WTC11 (cell line): ENCODE measurements at regions of chr3 and their contacts with region 1.

Region 1: GRCh38 chr3:12135029-12135657 is 23.6 kb downstream of the TIMP4 start:
- DNase-seq: peak; percentile 74
- ATAC-seq: peak; percentile 93
- H3K4me3 Mint-ChIP-seq: no peak overlapping the region
- H3K27ac Mint-ChIP-seq: no peak overlapping the region
- H3K4me1 Mint-ChIP-seq: no peaks in the 10 kb centered on the region; the same call in 1 of the 2 replicates
- H3K27me3 Mint-ChIP-seq: no peaks in the 10 kb centered on the region
- CTCF ChIP-seq: peak; percentile 61; the same call in 1 of the 2 replicates

Region 2: GRCh38 chr3:11976976-11977375 is 158.2 kb before region 1 on chr3:
- CTCF ChIA-PET with region 1: no interaction called
- POLR2A ChIA-PET with region 1: no interaction called
- DNase-seq: no peak
- ATAC-seq: no peak
- H3K4me3 Mint-ChIP-seq: no peak overlapping the region
- H3K27ac Mint-ChIP-seq: no peak overlapping the region
- H3K4me1 Mint-ChIP-seq: peaks cover 5% of the 10 kb centered on the region
- H3K27me3 Mint-ChIP-seq: peaks cover 3% of the 10 kb centered on the region; the same call in 1 of the 2 replicates
- CTCF ChIP-seq: no peak

Region 3: DNA sequence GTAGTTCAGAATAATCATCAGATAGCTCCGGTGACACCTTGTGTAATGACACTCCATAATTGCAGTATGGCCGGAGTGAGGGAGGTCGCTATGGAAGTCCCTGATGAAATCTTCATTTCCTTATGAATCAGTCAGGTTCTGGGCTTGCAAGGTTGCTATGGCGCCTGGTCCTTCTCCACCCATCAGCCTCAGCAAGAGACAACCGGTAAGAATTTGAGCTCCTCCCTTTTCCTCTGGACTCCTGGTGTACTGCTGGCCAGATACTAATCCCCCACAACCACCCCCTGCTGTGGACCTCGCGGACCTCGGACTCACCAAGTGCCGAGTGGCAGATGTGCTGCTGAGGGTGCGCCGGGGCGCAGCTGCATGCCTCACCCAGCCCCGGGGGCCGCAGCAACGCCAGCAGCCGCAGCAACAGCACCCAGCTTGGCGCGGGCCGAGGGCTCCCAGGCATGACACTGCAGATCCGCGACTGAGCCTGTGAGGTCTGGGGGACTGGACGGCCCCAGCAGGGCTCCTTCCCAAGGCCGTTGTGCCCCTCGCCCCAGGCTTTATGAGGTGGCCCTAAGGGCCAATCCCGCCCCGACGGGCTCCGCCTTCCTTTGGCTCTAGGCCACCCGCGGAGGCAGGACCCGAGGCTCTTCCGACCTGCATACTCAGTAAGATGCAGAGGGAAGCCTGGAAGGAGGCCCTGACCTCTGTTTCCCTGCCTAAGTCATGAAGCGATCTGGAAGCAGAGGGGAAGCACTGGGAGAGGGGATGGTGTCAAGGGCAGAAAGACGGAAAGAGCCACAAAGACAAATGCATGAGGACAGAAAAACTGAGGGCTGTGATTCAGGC is 23.5 kb after region 1 on chr3 and contains the start of gene TIMP4:
- CTCF ChIA-PET with region 1: interaction called, 15 read pairs
- POLR2A ChIA-PET with region 1: no interaction called
- DNase-seq: peak; percentile 49
- ATAC-seq: peak; percentile 69
- H3K4me3 Mint-ChIP-seq: peak within 1 kb of the TSS; percentile 66
- H3K27ac Mint-ChIP-seq: peak within 1 kb of the TSS; percentile 92
- H3K4me1 Mint-ChIP-seq: peaks cover 44% of the 10 kb centered on the region
- H3K27me3 Mint-ChIP-seq: no peaks in the 10 kb centered on the region
- CTCF ChIP-seq: no peak
- total RNA-seq, gene TIMP4: 4.1 to 11.8 TPM (median 4.8 TPM) in 3 replicates

Region 4: DNA sequence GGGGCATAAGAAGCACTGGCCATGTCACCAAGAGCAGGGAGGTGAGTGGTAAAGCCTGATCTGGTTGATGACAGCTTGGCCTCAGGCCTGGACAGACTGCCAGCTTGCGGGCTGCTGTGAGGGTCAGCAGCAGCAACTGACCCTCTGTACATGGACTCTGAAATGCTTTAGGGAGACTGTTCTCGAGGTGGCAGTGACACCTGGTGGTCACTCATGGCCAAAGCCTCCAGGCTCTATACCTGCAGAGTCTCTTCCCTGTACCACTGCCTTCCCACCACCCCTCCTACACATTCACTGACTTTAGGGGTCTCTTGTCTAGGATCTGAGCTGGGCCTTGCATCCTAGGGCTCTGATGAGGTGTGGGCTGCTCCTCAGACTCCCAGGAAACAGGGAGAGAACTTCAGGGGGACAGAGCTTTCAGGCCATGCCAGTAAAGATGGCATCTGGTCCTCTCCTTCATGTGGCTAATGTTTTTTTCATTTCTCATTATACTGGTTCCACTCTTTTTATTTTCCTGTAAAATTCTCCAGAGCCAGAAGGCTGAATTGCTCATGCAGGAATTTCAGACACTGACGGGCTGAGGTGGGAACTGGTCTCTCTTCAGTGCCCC is 40.8 kb after region 1 on chr3:
- CTCF ChIA-PET with region 1: interaction called, 37 read pairs
- POLR2A ChIA-PET with region 1: interaction called, 3 read pairs
- DNase-seq: peak; percentile 76
- ATAC-seq: peak; percentile 96
- H3K4me3 Mint-ChIP-seq: no peak overlapping the region
- H3K27ac Mint-ChIP-seq: no peak overlapping the region
- H3K4me1 Mint-ChIP-seq: no peaks in the 10 kb centered on the region
- H3K27me3 Mint-ChIP-seq: no peaks in the 10 kb centered on the region
- CTCF ChIP-seq: peak; percentile 70

Region 5: GRCh38 chr3:12294885-12295580 is 159.9 kb after region 1 on chr3:
- CTCF ChIA-PET with region 1: no interaction called
- POLR2A ChIA-PET with region 1: no interaction called
- DNase-seq: no peak
- ATAC-seq: no peak
- H3K4me3 Mint-ChIP-seq: no peak overlapping the region
- H3K27ac Mint-ChIP-seq: no peak overlapping the region
- H3K4me1 Mint-ChIP-seq: peaks cover 10% of the 10 kb centered on the region
- H3K27me3 Mint-ChIP-seq: peaks cover 28% of the 10 kb centered on the region
- CTCF ChIP-seq: no peak